Gastrocnemius medialis (tissue), 4 donors: ENCODE measurements at regions of chr16 and their contacts with region 1.

Region 1: GRCh38 chr16:30112197-30113030 is 923 bp downstream of the GDPD3 start:
- DNase-seq: peak in 1 of 2 donors; percentile 32
- ATAC-seq: no peak
- H3K4me3 ChIP-seq: no peak overlapping the region
- H3K27ac ChIP-seq: no peak overlapping the region
- H3K4me1 ChIP-seq: no peaks in the 10 kb centered on the region
- H3K27me3 ChIP-seq: no peaks in the 10 kb centered on the region
- CTCF ChIP-seq: peak in 4 of 5 experiments; percentile 53 to 62 (median 58)
- POLR2A ChIP-seq: no peak

Region 2: GRCh38 chr16:29900102-29900887 is 212.1 kb before region 1 on chr16 and contains the start of gene ASPHD1:
- in situ Hi-C with region 1: no loop called
- intact Hi-C with region 1: no loop called
- DNase-seq: peak in 1 of 2 donors; percentile 17
- ATAC-seq: peak; percentile 81 to 86
- H3K4me3 ChIP-seq: peak within 1 kb of the TSS; percentile 45 to 62 (median 58)
- H3K27ac ChIP-seq: no peak within 1 kb of the TSS
- H3K4me1 ChIP-seq: peaks cover 0 to 5% of the 10 kb centered on the region in 2 donors
- H3K27me3 ChIP-seq: peaks cover 35 to 42% (median 38%) of the 10 kb centered on the region in 3 donors
- CTCF ChIP-seq: no peak
- POLR2A ChIP-seq: no peak
- total RNA-seq, gene ASPHD1: not detected

Region 3: DNA sequence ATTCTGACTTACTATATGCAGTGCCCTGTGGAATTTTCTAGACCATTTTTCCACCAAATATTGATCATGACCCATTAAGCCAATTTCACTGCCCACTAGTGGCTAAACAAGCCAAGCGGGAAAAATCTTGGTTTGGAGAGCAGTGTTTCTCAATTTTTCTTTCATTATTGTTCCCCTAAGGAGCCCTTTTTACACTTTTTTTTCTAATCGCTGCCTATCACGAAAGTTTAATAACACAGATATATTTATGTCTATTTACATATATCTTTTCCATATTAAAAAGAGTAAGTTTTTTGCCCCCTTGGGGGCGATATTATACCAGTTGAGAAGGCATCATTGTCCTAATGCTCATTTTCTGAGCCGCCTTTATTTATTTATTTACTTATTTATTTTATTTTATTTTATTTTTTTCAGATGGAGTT is 70.6 kb before region 1 on chr16:
- in situ Hi-C with region 1: no loop called
- intact Hi-C with region 1: no loop called
- DNase-seq: no peak
- ATAC-seq: no peak
- H3K4me3 ChIP-seq: no peak overlapping the region
- H3K27ac ChIP-seq: no peak overlapping the region
- H3K4me1 ChIP-seq: no peaks in the 10 kb centered on the region
- H3K27me3 ChIP-seq: no peaks in the 10 kb centered on the region
- CTCF ChIP-seq: peak in 3 of 5 experiments; percentile 34 to 65 (median 48)
- POLR2A ChIP-seq: no peak

Region 4: GRCh38 chr16:30052671-30053372 is 59.6 kb before region 1 on chr16:
- in situ Hi-C with region 1: loop called in 1 of 4 experiments (anchors 5 kb)
- intact Hi-C with region 1: no loop called
- DNase-seq: peak; percentile 78 to 84
- ATAC-seq: peak; percentile 80 to 82
- H3K4me3 ChIP-seq: peak overlapping the region; percentile 57 to 82 (median 78)
- H3K27ac ChIP-seq: peak overlapping the region in 2 of 4 donors; percentile 16 to 17
- H3K4me1 ChIP-seq: peaks cover 7% of the 10 kb centered on the region in 2 donors
- H3K27me3 ChIP-seq: no peaks in the 10 kb centered on the region
- CTCF ChIP-seq: no peak
- POLR2A ChIP-seq: no peak